Left ventricle myocardium superior (tissue), 1 donor: ENCODE measurements at regions of chr5 and their contacts with region 1.

Region 1: GRCh38 chr5:64147849-64148441 is 17.7 kb upstream of the RNF180 start:
- DNase-seq: peak; percentile 65
- ATAC-seq: peak; percentile 77

Region 2: DNA sequence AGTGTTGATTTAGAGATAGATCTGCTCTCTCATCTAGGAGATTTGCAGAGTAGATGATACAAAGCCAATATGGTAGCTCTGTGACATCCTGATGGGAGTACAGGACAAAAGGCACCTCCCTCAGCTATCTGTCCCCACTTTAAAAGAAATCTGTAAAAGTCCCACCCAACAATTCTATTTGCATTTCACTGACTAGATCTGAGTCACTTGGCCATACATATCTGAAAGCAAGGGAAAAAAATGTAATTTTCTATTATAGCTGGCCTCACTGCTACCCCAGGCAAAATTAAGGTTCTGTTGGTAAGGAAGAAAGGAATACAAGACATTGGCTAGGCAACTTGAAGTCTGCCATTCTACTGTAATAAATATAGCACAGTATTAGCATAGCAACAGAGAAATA is 78.5 kb before region 1 on chr5:
- intact Hi-C with region 1: no loop called
- DNase-seq: no peak
- ATAC-seq: no peak

Region 3: DNA sequence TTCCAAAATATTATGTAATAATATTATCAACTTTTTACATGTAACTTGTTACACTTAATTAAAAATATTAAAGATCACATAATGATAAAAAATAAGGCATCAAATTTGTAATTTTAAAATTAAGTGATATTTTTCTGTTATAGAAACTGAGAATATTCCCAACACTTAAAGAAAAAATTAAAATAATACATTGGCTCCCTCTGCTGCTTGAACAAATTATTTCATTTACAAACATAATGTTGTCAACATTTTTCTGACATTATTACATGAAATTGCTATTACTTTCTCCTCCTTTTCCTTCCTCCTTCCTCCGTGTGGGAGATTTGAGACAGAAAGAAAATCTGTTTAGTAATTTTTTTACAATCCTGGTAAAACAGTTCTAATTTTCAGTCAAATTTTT is 60.0 kb after region 1 on chr5:
- intact Hi-C with region 1: loop called (anchors 10 kb)
- DNase-seq: no peak
- ATAC-seq: no peak

Region 4: DNA sequence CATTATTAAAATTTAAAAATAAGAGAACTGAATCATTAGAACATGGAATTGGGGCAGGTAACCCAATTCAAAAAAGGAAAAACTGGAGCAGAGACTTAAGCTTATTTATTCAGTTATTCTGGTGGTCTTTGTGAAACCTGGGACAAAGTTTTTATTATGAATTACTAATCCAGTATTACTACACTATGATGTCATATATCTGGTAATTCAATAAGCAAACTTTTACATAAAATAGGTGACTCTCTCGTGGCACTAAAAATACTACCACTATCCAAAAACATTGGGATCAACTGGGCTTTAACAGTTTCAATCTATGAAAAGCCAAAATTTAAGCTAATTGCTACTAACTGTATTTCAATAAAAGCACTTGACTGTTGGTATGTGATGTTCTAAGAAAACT is 222.8 kb after region 1 on chr5:
- intact Hi-C with region 1: no loop called
- DNase-seq: no peak
- ATAC-seq: no peak